Aorta (tissue), 5 donors: ENCODE measurements at regions of chr5 and their contacts with region 1.

Region 1: GRCh38 chr5:34656001-34656699 is at the start of gene RAI14:
- DNase-seq: peak; percentile 85 to 95
- ATAC-seq: peak; percentile 90
- H3K4me3 ChIP-seq: peak within 1 kb of the TSS; percentile 93 to 98
- H3K27ac ChIP-seq: peak within 1 kb of the TSS; percentile 81 to 97
- H3K4me1 ChIP-seq: no peaks in the 10 kb centered on the region
- H3K27me3 ChIP-seq: no peaks in the 10 kb centered on the region
- total RNA-seq, gene RAI14: 99.8 to 214 TPM

Region 2: GRCh38 chr5:34522599-34523386 is 133.4 kb before region 1 on chr5:
- intact Hi-C with region 1: loop called in 1 of 2 experiments (anchors 5 kb)
- DNase-seq: peak; percentile 76 to 79
- ATAC-seq: peak; percentile 84
- H3K4me3 ChIP-seq: no peak overlapping the region
- H3K27ac ChIP-seq: peak overlapping the region in 1 of 2 donors; percentile 86
- H3K4me1 ChIP-seq: peaks cover 5 to 10% of the 10 kb centered on the region in 2 donors
- H3K27me3 ChIP-seq: no peaks in the 10 kb centered on the region

Region 3: GRCh38 chr5:34608859-34609648 is 47.1 kb before region 1 on chr5:
- intact Hi-C with region 1: loop called (anchors 5 kb)
- DNase-seq: no peak
- ATAC-seq: peak; percentile 75
- H3K4me3 ChIP-seq: no peak overlapping the region
- H3K27ac ChIP-seq: peak overlapping the region in 1 of 2 donors; percentile 51
- H3K4me1 ChIP-seq: peaks cover 3 to 9% of the 10 kb centered on the region in 2 donors
- H3K27me3 ChIP-seq: no peaks in the 10 kb centered on the region

Region 4: GRCh38 chr5:34706084-34706483 is 49.9 kb after region 1 on chr5:
- intact Hi-C with region 1: loop called in 1 of 2 experiments (anchors 1 kb)
- DNase-seq: no peak
- ATAC-seq: no peak
- H3K4me3 ChIP-seq: no peak overlapping the region
- H3K27ac ChIP-seq: peak overlapping the region in 1 of 2 donors; percentile 82
- H3K4me1 ChIP-seq: peaks cover 4 to 12% of the 10 kb centered on the region in 2 donors
- H3K27me3 ChIP-seq: no peaks in the 10 kb centered on the region

Region 5: GRCh38 chr5:34838785-34839714 is 182.9 kb after region 1 on chr5 and contains the start of gene TTC23L:
- intact Hi-C with region 1: loop called in 1 of 2 experiments (anchors 5 kb)
- DNase-seq: peak; percentile 93 to 95
- ATAC-seq: peak; percentile 95
- H3K4me3 ChIP-seq: peak within 1 kb of the TSS; percentile 3 to 51
- H3K27ac ChIP-seq: peak within 1 kb of the TSS in 1 of 2 donors; percentile 4
- H3K4me1 ChIP-seq: no peaks in the 10 kb centered on the region
- H3K27me3 ChIP-seq: no peaks in the 10 kb centered on the region
- total RNA-seq, gene TTC23L: 0.62 to 0.72 TPM

Region 6: DNA sequence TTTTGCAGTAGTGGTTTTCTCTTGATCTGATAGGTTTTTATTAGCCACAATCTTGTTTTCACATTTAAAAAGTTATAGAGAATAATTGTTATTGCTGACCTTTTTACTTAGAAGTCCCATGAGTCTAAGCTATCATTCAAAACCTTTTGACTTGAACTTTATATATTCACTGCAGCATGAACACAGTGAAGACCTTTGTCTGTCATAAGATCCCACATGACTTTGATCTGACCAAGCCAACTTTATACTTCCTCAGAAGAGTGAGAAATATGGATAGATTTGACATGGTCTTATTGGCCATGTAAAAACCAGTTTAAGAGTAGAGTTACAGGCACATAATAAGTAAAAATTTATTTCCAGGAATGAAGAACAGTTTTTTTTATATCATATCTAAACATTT is 225.1 kb after region 1 on chr5:
- intact Hi-C with region 1: no loop called
- DNase-seq: no peak
- ATAC-seq: no peak
- H3K4me3 ChIP-seq: no peak overlapping the region
- H3K27ac ChIP-seq: no peak overlapping the region
- H3K4me1 ChIP-seq: no peaks in the 10 kb centered on the region
- H3K27me3 ChIP-seq: no peaks in the 10 kb centered on the region